ENCODE measurements at regions of chr11 and their contacts with region 1.

Region 1: GRCh38 chr11:120108154-120108865 is 29.6 kb downstream of the TRIM29 start:
- DNase-seq: no peak
- H3K4me3 ChIP-seq: no peak overlapping the region
- H3K27ac ChIP-seq: no peak overlapping the region
- H3K4me1 ChIP-seq: no peaks in the 10 kb centered on the region
- H3K27me3 ChIP-seq: no peaks in the 10 kb centered on the region
- CTCF ChIP-seq: peak; percentile 93 to 96 (median 95)
- POLR2A ChIP-seq: no peak

Region 2: GRCh38 chr11:119666463-119667131 is 441.7 kb before region 1 on chr11:
- intact Hi-C with region 1: loop called (anchors 5 kb)
- DNase-seq: no peak
- H3K4me3 ChIP-seq: no peak overlapping the region
- H3K27ac ChIP-seq: no peak overlapping the region
- H3K4me1 ChIP-seq: peaks cover 23% of the 10 kb centered on the region
- H3K27me3 ChIP-seq: no peaks in the 10 kb centered on the region
- CTCF ChIP-seq: peak; percentile 81 to 93 (median 86)
- POLR2A ChIP-seq: no peak

Measured in vagina (tissue), 2 donors.